ENCODE measurements at regions of chr7 and their contacts with region 1.

Region 1: DNA sequence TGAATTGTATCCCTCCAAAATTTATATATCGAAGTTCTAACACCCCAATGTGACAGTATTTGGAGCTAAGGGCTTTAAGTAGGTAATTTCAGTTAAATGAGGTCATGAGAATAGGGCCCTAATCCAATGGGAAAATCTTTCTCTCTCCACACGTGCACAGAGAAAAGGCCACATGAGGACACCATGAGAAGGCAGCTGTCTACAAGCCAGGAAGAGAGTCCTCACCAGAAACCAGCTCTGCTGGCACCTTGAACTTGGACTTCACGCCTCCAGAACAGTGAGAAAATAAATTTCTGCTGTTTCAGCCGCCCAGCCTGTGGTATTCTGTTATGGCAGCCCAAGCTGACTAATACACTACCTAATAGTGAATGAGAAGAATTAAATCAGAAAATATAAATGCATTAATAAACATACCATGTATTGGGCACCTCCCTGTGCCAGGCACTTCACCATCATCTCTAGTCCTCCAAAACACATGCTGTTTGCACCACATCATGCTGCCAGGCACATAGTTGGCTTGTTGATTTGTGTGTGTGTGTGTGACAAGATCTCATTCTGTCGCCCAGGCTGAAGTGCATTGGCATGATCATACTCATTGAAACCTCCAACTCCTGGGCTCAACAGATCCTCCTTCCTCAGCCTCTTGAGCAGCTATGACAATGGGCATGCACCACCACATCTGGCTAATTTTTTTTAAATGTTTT is 9.1 kb upstream of the TOMM7 start:
- DNase-seq: no peak
- ATAC-seq: no peak
- H3K4me3 ChIP-seq: no peak overlapping the region
- H3K27ac ChIP-seq: no peak overlapping the region
- H3K4me1 ChIP-seq: no peaks in the 10 kb centered on the region
- CTCF ChIP-seq: no peak
- EP300 ChIP-seq: no peak
- POLR2A ChIP-seq: no peak
- RAD21 ChIP-seq: no peak

Region 2: DNA sequence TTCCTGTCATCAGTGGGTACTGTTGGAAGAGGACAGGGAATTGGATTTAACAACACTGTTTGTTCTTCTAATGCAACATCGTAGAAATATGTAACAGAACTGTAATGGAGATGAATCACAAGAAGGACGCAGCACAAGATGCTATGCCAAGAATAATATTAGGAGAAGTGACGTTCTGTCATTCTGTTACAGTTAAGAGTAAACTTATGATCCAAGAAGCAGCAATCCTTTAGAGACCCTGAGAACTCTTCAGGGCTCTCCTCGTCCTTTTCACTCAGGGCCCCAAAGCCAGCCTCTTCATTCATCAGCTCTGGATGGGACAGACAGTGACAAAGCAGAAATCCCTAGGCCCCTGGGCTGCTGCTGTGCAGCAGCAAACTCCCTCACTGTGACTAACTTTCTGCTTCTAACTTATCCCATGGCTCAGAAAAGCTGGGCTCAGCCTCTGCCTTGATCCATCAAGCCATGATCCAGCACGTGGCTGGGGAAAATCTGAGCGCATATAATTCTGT is 113.5 kb before region 1 on chr7:
- CTCF ChIA-PET with region 1: no interaction called
- POLR2A ChIA-PET with region 1: interaction called, 12 read pairs
- DNase-seq: peak in 1 of 2 experiments; percentile 76
- ATAC-seq: peak; percentile 92 to 95
- H3K4me3 ChIP-seq: no peak overlapping the region
- H3K27ac ChIP-seq: peak overlapping the region; percentile 76 to 82
- H3K4me1 ChIP-seq: peaks cover 23% of the 10 kb centered on the region
- CTCF ChIP-seq: no peak
- EP300 ChIP-seq: peak; percentile 72 to 77; a peak in 2 of 5 replicates
- POLR2A ChIP-seq: no peak
- RAD21 ChIP-seq: no peak; a peak in 1 of 5 replicates

Region 3: GRCh38 chr7:22962775-22963358 is 131.1 kb after region 1 on chr7:
- CTCF ChIA-PET with region 1: no interaction called
- POLR2A ChIA-PET with region 1: no interaction called
- DNase-seq: no peak
- ATAC-seq: no peak
- H3K4me3 ChIP-seq: no peak overlapping the region
- H3K27ac ChIP-seq: no peak overlapping the region
- H3K4me1 ChIP-seq: no peaks in the 10 kb centered on the region
- CTCF ChIP-seq: no peak
- EP300 ChIP-seq: no peak
- POLR2A ChIP-seq: no peak
- RAD21 ChIP-seq: no peak